Mammary epithelial cell (primary cell): ENCODE measurements at regions of chr4 and their contacts with region 1.

Region 1: DNA sequence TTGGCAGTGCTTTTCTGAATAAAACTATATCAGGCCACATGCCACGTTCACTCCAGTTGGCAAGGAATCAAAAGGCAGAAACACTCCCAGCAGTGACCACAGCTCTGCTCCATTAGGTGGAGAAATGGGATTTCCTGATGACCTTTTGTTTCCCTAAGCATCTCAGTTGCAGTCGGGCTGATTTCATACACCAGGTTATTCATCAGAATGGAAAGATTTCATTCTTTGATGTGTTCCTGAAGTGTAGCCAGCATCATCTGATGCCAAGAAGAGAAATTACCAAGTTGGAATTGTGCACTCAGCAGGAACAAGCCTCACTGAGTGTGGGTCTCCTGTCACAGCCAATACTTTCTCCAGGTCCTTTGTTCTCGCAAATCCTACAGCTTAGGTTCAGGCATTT is 193.7 kb downstream of the SPATA18 start:
- DNase-seq: no peak
- H3K4me3 ChIP-seq: no peak overlapping the region
- H3K27ac ChIP-seq: no peak overlapping the region
- H3K4me1 ChIP-seq: peaks cover 12% of the 10 kb centered on the region
- H3K27me3 ChIP-seq: no peaks in the 10 kb centered on the region
- CTCF ChIP-seq: no peak

Region 2: DNA sequence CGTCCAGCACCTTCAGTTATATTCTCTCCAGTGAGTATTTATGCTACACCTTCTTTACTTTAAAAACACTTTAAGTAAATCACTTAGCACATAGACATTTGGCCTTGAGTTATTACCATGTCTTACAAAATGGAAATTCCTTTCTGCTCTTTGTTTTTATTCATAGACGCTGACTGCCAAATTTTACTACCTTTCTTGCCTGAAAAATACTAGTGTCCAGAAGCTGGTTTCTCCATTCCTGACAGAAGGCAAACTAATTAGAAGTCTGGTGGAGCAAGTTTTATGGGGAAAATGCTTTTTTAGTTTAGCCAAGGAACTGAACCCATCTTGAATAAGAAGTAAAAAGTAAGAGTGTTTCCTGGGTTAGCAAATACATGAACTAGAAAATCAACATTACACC is 128.2 kb before region 1 on chr4:
- CTCF ChIA-PET with region 1: no interaction called
- dilution Hi-C with region 1: no loop called
- in situ Hi-C with region 1: no loop called
- intact Hi-C with region 1: no loop called
- DNase-seq: no peak
- H3K4me3 ChIP-seq: no peak overlapping the region
- H3K27ac ChIP-seq: no peak overlapping the region
- H3K4me1 ChIP-seq: no peaks in the 10 kb centered on the region
- H3K27me3 ChIP-seq: no peaks in the 10 kb centered on the region
- CTCF ChIP-seq: no peak

Region 3: GRCh38 chr4:52172166-52172565 is 72.7 kb before region 1 on chr4:
- CTCF ChIA-PET with region 1: no interaction called
- dilution Hi-C with region 1: no loop called
- in situ Hi-C with region 1: no loop called
- intact Hi-C with region 1: no loop called
- DNase-seq: peak; percentile 9
- H3K4me3 ChIP-seq: no peak overlapping the region
- H3K27ac ChIP-seq: no peak overlapping the region
- H3K4me1 ChIP-seq: no peaks in the 10 kb centered on the region
- H3K27me3 ChIP-seq: no peaks in the 10 kb centered on the region
- CTCF ChIP-seq: peak; percentile 46 to 52

Region 4: DNA sequence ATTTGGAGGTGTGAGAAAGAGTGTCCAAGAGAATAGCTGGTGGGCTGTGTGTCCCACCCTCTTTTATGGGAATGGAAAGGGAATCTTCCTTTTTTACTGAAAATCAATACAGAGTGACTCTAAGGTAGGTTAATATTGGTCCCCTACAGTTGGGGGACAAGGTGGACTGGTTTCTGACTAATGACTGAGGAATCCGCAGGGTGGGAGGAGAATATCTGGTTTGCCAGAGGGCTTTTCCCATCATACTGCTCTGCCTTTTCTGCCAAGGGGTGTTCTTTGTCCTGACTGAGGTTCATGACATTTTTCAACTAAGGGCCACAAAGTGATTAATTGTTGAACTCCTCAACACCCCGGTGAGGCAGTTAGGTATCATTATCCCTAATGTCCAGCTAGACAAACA is 67.9 kb after region 1 on chr4:
- CTCF ChIA-PET with region 1: no interaction called
- dilution Hi-C with region 1: no loop called
- in situ Hi-C with region 1: no loop called
- intact Hi-C with region 1: loop called (anchors 10 kb)
- DNase-seq: peak; percentile 66
- H3K4me3 ChIP-seq: no peak overlapping the region
- H3K27ac ChIP-seq: peak overlapping the region; percentile 32
- H3K4me1 ChIP-seq: peaks cover 23% of the 10 kb centered on the region
- H3K27me3 ChIP-seq: no peaks in the 10 kb centered on the region
- CTCF ChIP-seq: no peak